CD4-positive, alpha-beta T cell (primary cell): ENCODE measurements at regions of chr4 and their contacts with region 1.

Region 1: GRCh38 chr4:48141048-48141447 is 7.0 kb upstream of the TXK start:
- DNase-seq: peak in 3 of 14 experiments; percentile 72 to 74 (median 73)
- ATAC-seq: peak; percentile 40
- H3K4me3 ChIP-seq: no peak overlapping the region
- H3K4me3 Mint-ChIP-seq: no peak overlapping the region
- H3K27ac ChIP-seq: no peak overlapping the region
- H3K27ac Mint-ChIP-seq: peak overlapping the region; percentile 37
- H3K4me1 ChIP-seq: peaks cover 43% of the 10 kb centered on the region
- H3K4me1 Mint-ChIP-seq: peaks cover 53% of the 10 kb centered on the region
- H3K27me3 ChIP-seq: no peaks in the 10 kb centered on the region
- H3K27me3 Mint-ChIP-seq: no peaks in the 10 kb centered on the region
- CTCF ChIP-seq: peak; percentile 76

Region 2: DNA sequence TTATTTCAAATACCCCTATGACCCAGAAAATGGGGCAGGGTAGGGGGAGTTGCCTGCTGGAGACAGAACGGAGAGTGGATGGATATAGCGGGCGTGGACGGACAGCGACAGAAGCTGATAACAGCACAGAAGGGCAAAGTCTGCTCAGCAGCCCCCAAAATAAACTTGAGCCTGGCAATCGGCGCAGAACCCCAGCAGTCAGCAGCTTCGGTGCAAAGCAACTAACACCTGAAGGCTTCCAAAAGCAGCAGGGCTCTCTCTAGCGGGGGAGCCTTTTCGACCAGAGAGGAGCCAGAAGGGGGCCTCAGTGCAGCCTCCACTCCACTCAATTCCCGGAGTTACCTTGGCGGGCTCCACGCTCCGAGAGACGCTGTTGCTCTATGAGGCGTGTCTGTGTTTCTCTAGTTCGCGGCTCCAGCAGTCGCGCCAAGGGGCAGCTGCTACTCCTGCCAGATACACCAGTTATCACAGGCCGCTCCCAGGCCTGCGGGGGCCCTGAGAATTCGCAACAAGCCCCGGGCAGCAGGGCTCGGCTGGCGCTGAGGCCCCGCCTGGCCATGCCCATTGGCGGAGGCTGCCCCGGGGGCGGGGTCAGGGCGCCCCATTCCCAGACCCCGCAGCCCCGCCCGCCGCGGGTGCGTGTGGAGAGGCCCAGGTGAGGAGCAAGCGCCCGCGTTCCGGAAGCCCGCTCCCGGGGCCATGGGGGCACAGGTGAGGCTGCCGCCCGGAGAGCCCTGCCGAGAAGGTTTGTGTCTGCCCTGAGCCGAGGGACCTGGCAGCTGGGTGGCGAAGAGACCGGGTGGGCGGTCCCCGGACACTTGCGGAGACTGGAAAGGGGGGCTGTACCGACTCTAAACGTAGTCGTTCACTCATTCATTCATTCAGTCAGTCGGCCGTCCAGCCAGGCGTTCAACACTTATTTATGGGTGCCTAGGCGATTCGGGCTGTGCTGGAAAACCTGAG is 124.6 kb before region 1 on chr4 and contains the starts of genes CNGA1 and NIPAL1:
- CTCF ChIA-PET with region 1: no interaction called
- POLR2A ChIA-PET with region 1: interaction called, 3 read pairs
- intact Hi-C with region 1: loop called in 1 of 2 experiments (anchors 5 kb)
- DNase-seq: peak; percentile 36 to 83 (median 62)
- ATAC-seq: peak; percentile 96
- H3K4me3 ChIP-seq: peak within 1 kb of the TSS; percentile 65
- H3K4me3 Mint-ChIP-seq: peak within 1 kb of the TSS; percentile 84
- H3K27ac ChIP-seq: no peak within 1 kb of the TSS
- H3K27ac Mint-ChIP-seq: no peak within 1 kb of the TSS
- H3K4me1 ChIP-seq: peaks cover 22% of the 10 kb centered on the region
- H3K4me1 Mint-ChIP-seq: peaks cover 12% of the 10 kb centered on the region
- H3K27me3 ChIP-seq: peaks cover 0 to 9% of the 10 kb centered on the region in 2 experiments
- H3K27me3 Mint-ChIP-seq: peaks cover 22% of the 10 kb centered on the region
- CTCF ChIP-seq: peak; percentile 40
- total RNA-seq, gene CNGA1: not detected
- total RNA-seq, gene NIPAL1: 0.45 to 0.85 TPM

Region 3: GRCh38 chr4:48093949-48094550 is 47.0 kb before region 1 on chr4:
- CTCF ChIA-PET with region 1: no interaction called
- POLR2A ChIA-PET with region 1: no interaction called
- intact Hi-C with region 1: loop called in 1 of 2 experiments (anchors 10 kb)
- DNase-seq: no peak
- ATAC-seq: no peak
- H3K4me3 ChIP-seq: no peak overlapping the region
- H3K4me3 Mint-ChIP-seq: no peak overlapping the region
- H3K27ac ChIP-seq: peak overlapping the region in 1 of 2 donors; percentile 17
- H3K27ac Mint-ChIP-seq: peak overlapping the region; percentile 60
- H3K4me1 ChIP-seq: no peaks in the 10 kb centered on the region
- H3K4me1 Mint-ChIP-seq: peaks cover 9% of the 10 kb centered on the region
- H3K27me3 ChIP-seq: no peaks in the 10 kb centered on the region
- H3K27me3 Mint-ChIP-seq: no peaks in the 10 kb centered on the region
- CTCF ChIP-seq: no peak

Region 4: DNA sequence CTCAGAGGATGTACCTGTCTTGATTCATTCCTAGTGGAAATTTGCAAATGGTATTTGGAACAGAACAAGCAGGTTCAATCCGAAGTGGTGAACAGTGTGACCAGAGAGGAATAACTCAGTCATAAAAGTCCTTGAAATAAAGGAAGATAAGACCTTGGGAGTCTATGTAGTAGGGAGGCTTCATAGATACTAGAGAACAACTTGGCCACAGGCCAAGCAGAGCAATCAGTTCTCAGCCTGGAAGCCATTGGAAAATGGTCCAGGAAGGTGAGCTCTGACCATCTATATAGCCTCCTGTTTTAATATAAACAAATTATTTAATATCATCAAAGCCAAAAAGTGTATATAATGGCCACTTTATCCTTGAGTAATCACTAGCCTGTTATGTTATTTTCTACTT is 18.3 kb before region 1 on chr4:
- CTCF ChIA-PET with region 1: interaction called, 70 read pairs
- POLR2A ChIA-PET with region 1: interaction called, 125 read pairs
- intact Hi-C with region 1: loop called in 1 of 2 experiments (anchors 2 kb)
- DNase-seq: no peak
- ATAC-seq: no peak
- H3K4me3 ChIP-seq: no peak overlapping the region
- H3K4me3 Mint-ChIP-seq: no peak overlapping the region
- H3K27ac ChIP-seq: no peak overlapping the region
- H3K27ac Mint-ChIP-seq: no peak overlapping the region
- H3K4me1 ChIP-seq: peaks cover 64% of the 10 kb centered on the region
- H3K4me1 Mint-ChIP-seq: peaks cover 70% of the 10 kb centered on the region
- H3K27me3 ChIP-seq: no peaks in the 10 kb centered on the region
- H3K27me3 Mint-ChIP-seq: no peaks in the 10 kb centered on the region
- CTCF ChIP-seq: no peak

Region 5: GRCh38 chr4:48269861-48270522 is 128.9 kb after region 1 on chr4:
- CTCF ChIA-PET with region 1: no interaction called
- POLR2A ChIA-PET with region 1: no interaction called
- intact Hi-C with region 1: loop called (anchors 5 to 10 kb)
- DNase-seq: peak; percentile 73 to 91 (median 80)
- ATAC-seq: peak; percentile 87
- H3K4me3 ChIP-seq: peak overlapping the region; percentile 87
- H3K4me3 Mint-ChIP-seq: peak overlapping the region; percentile 98
- H3K27ac ChIP-seq: peak overlapping the region in 1 of 2 donors; percentile 55
- H3K27ac Mint-ChIP-seq: peak overlapping the region; percentile 79
- H3K4me1 ChIP-seq: peaks cover 19% of the 10 kb centered on the region
- H3K4me1 Mint-ChIP-seq: peaks cover 29% of the 10 kb centered on the region
- H3K27me3 ChIP-seq: no peaks in the 10 kb centered on the region
- H3K27me3 Mint-ChIP-seq: no peaks in the 10 kb centered on the region
- CTCF ChIP-seq: peak; percentile 46

Region 6: DNA sequence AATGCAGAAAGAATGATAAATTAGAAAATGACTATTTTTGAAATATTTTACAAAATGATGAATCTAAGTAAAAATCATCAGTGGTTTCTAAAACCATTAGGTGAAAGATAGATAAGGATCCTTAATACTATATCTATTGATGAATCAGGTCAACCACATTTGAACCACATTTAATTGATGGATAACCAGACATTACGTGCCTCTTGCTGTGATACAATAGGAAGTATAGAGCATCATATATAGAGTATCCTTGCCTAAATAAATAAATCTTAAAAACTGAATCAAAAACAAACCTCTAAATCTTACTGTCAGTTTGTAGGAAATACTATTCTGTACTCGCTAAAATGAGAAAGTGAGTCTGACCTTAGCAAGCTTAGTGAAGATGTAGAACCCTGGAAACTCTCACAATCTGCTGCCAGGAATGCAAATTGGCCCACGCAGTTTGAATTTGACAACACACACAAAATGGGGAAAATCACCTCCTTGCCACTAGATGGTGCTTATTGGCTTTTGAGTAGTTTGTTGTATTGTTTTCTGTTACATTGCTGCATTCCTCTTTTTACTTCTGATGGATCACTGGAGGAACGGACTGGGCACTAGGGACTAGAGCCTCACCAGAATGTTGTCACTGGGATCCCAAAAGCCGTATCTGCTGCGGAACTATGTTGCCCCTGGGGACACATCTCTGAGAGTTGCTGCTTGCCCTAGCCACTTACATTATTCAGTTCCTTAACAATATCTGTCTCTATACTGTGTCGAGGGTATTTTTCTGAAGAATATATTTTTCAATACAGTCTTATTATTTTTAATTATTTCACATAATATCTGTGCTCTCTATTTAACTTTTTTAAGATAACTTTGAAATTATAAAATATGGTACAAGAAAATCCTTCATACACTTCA is 174.9 kb after region 1 on chr4:
- CTCF ChIA-PET with region 1: no interaction called
- POLR2A ChIA-PET with region 1: no interaction called
- intact Hi-C with region 1: no loop called
- DNase-seq: peak in 5 of 14 experiments; percentile 5 to 68 (median 43)
- ATAC-seq: peak; percentile 61
- H3K4me3 ChIP-seq: no peak overlapping the region
- H3K4me3 Mint-ChIP-seq: no peak overlapping the region
- H3K27ac ChIP-seq: no peak overlapping the region
- H3K27ac Mint-ChIP-seq: no peak overlapping the region
- H3K4me1 ChIP-seq: no peaks in the 10 kb centered on the region
- H3K4me1 Mint-ChIP-seq: no peaks in the 10 kb centered on the region
- H3K27me3 ChIP-seq: no peaks in the 10 kb centered on the region
- H3K27me3 Mint-ChIP-seq: no peaks in the 10 kb centered on the region
- CTCF ChIP-seq: peak; percentile 71